Mucosa of descending colon (tissue), 3 donors: ENCODE measurements at regions of chr22 and their contacts with region 1.

Region 1: DNA sequence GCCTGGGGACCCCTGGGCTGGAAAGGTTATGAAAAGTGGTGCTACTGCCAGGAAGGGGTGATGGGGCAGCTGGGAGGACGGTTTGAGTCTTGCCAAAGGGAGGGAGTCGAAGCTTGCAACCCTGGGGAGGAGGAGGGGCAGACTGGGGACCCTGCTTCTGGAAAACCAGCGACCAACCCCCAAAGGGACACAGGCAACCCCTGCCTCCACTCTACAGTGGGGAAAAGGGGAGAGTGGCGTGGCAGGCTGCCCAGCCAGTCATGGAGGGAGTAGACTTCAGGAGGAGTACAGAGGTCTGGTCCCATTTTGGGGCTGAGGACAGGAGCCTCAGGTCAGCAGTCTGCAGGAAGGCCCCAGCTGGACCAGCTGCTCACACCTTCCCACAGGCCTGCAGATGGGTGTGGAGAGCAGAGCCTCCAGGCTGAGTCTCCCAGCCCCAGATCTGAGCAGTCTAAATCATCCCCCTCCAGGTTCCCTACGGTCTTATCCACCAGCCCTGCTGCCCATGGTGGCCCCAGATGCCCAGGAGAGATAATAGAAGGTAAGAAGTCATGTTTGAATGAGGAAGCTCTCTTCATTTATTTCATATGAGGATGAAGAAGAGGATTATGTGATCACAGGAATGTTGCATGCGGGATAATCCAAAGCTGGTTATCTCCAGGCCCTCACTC is 3.3 kb downstream of the DDT start:
- DNase-seq: no peak
- ATAC-seq: no peak
- H3K4me3 ChIP-seq: no peak overlapping the region
- H3K4me1 ChIP-seq: no peaks in the 10 kb centered on the region
- CTCF ChIP-seq: no peak

Region 2: GRCh38 chr22:23353004-23353403 is 617.9 kb before region 1 on chr22:
- intact Hi-C with region 1: no loop called
- DNase-seq: no peak
- ATAC-seq: no peak
- H3K4me3 ChIP-seq: no peak overlapping the region
- H3K4me1 ChIP-seq: no peaks in the 10 kb centered on the region
- CTCF ChIP-seq: no peak

Region 3: GRCh38 chr22:23925020-23925606 is 45.8 kb before region 1 on chr22:
- intact Hi-C with region 1: loop called in 1 of 2 experiments (anchors 5 kb)
- DNase-seq: no peak
- ATAC-seq: no peak
- H3K4me3 ChIP-seq: no peak overlapping the region
- H3K4me1 ChIP-seq: no peaks in the 10 kb centered on the region
- CTCF ChIP-seq: no peak